Activated T-helper 1 cell treated with anti-CD3 and anti-CD28 coated beads, Interleukin-12 subunit alpha, Interleukin-12 subunit beta, Interleukin-2, Interleukin-4 antibody, amounts not matched to agents 30 ng/mL and 10 ng/mL and 1 ng/mL, durations not matched to agents 14 hours and 24 hours and 36 hours (primary cell): ENCODE measurements at regions of chr2 and their contacts with region 1.

Region 1: GRCh38 chr2:8544786-8545694 is 136.8 kb upstream of the ID2 start:
- DNase-seq: peak; percentile 83
- H3K4me3 Mint-ChIP-seq: peak overlapping the region; percentile 59
- H3K27ac Mint-ChIP-seq: peak overlapping the region; percentile 99
- H3K4me1 Mint-ChIP-seq: peaks cover 80% of the 10 kb centered on the region
- H3K27me3 Mint-ChIP-seq: no peaks in the 10 kb centered on the region

Region 2: DNA sequence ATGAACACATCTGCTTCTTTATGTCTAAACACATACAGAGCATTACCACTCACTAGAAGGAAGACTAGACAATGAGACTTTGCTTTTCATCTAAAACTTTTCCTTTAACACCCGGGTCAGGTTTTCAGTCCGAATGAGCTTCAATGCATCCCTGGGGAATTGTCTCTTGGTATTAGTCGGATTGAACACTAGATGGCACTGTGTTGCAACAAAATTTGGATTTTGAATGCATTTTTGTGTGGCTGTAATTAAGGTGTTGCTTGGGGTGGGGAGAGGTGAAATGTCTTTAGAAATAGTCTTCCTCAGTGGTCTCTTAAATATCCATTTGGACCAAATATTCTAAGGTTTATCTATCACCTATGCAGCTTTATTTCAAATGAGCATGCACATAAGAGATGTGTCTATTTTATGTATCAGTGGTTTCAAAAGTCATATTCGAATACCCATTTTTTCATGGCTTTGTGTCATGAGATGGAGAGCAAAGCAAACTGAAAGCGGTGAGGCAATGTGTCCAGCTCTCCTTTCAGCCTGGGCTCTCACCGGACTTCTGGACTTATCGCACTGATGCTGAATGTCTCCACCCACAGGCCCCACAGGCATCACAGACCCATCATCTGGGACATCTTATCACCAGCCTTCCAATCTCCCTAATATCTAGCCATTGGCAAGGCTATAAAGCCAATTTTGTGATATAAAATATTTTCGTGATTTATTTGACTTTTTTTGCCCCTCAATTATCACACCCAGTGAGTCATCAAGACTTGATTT is 1117.6 kb before region 1 on chr2:
- intact Hi-C with region 1: loop called (anchors 1 kb)
- DNase-seq: peak; percentile 36
- H3K4me3 Mint-ChIP-seq: peak overlapping the region; percentile 2
- H3K27ac Mint-ChIP-seq: peak overlapping the region; percentile 69
- H3K4me1 Mint-ChIP-seq: peaks cover 48% of the 10 kb centered on the region
- H3K27me3 Mint-ChIP-seq: peaks cover 3% of the 10 kb centered on the region

Region 3: DNA sequence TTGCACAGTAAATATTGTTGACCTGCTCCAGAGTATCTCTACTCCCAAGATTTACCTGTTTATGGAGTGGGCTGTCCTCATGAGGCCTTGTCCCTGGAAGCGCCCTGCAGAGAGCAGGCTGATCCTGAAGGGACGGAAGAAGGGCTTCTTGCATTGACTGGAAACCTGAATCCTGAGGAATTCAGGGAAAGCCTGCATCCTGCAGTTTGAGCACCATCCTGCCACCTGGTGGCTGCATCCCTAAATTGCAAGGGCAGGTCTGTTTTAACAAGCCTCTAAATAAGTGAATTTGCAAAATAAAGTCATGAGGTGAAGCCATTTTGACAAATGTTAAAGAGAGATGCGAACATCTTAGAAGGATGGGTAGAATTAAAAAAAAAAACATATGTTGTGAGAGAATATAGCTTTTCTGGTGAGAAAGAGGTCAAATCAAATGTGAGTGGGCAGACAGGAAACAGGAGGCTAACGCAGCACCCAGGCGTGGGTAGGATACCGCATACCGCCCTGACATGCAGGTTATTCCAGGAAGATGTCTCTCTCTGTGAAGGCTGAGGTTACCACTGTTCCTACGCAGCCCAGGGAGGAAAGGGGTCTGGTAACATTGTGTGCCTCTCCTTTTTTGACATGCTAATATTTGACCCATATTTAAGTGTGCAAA is 872.9 kb before region 1 on chr2:
- intact Hi-C with region 1: loop called (anchors 1 kb)
- DNase-seq: peak; percentile 43
- H3K4me3 Mint-ChIP-seq: peak overlapping the region; percentile 71
- H3K27ac Mint-ChIP-seq: peak overlapping the region; percentile 93
- H3K4me1 Mint-ChIP-seq: peaks cover 79% of the 10 kb centered on the region
- H3K27me3 Mint-ChIP-seq: no peaks in the 10 kb centered on the region

Region 4: GRCh38 chr2:7930800-7931635 is 614.0 kb before region 1 on chr2:
- intact Hi-C with region 1: loop called (anchors 1 kb)
- DNase-seq: no peak
- H3K4me3 Mint-ChIP-seq: no peak overlapping the region
- H3K27ac Mint-ChIP-seq: peak overlapping the region; percentile 81
- H3K4me1 Mint-ChIP-seq: peaks cover 11% of the 10 kb centered on the region
- H3K27me3 Mint-ChIP-seq: no peaks in the 10 kb centered on the region

Region 5: DNA sequence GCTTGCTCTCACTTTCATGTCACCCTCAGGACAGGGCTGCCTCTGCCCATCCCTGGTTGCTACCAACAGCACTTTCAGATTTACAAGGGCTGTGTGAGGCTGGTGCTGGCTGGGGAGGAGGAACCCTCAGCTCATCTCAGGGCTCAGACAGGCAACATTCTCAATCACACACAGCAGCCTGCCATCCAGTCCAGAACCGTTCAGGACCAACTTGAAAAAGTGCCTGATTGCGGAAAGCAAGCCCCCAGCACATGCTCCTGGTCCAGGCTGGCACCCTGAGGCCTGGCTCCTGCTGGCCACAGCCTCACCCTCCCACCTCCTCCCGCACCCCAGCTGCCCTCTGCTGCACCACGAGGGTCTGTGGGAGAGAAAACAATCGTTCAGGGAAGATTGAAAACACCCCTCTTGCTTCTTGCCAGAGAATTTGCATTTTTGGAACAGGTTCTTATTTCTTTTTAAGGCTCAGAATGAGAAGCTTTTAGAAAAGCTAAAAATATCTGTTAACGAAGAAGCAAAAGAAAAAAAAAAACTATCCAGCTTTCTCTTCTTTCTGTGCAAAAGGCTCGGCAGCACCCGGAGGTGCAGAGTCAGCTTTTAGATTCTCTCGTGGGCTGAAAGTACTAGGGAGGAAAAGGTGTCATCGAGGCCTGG is 267.0 kb before region 1 on chr2:
- intact Hi-C with region 1: no loop called
- DNase-seq: no peak
- H3K4me3 Mint-ChIP-seq: no peak overlapping the region
- H3K27ac Mint-ChIP-seq: no peak overlapping the region
- H3K4me1 Mint-ChIP-seq: peaks cover 28% of the 10 kb centered on the region
- H3K27me3 Mint-ChIP-seq: peaks cover 13% of the 10 kb centered on the region

Region 6: DNA sequence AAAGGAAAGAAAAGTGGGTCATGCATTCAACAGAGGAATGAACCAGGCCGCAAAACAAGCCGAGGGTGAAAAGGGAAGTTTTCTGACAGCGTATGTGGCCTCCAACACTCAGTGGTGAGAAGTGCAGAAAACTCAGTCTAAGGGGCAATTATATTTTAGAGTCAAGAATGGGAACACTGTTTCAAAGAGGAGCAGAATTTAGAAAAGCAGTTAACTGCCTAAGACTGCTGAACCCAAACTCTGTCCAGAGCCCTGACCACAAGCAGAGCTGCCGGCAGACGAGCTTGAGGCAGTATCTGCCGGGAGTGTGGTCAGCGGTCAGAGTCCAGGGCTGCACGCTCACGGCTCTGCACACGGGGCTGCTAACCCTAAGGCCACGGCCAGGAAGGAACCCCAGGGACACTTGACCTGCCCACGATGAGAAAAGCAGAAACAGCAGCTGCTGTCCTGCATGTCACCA is 210.1 kb before region 1 on chr2:
- intact Hi-C with region 1: loop called (anchors 1 kb)
- DNase-seq: no peak
- H3K4me3 Mint-ChIP-seq: no peak overlapping the region
- H3K27ac Mint-ChIP-seq: no peak overlapping the region
- H3K4me1 Mint-ChIP-seq: peaks cover 15% of the 10 kb centered on the region
- H3K27me3 Mint-ChIP-seq: peaks cover 6% of the 10 kb centered on the region

Region 7: GRCh38 chr2:8514796-8515758 is 30.0 kb before region 1 on chr2:
- intact Hi-C with region 1: loop called (anchors 1 kb)
- DNase-seq: peak; percentile 58
- H3K4me3 Mint-ChIP-seq: peak overlapping the region; percentile 35
- H3K27ac Mint-ChIP-seq: peak overlapping the region; percentile 95
- H3K4me1 Mint-ChIP-seq: peaks cover 68% of the 10 kb centered on the region
- H3K27me3 Mint-ChIP-seq: no peaks in the 10 kb centered on the region

Region 8: GRCh38 chr2:8761529-8762164 is 216.6 kb after region 1 on chr2:
- intact Hi-C with region 1: loop called (anchors 5 kb)
- DNase-seq: no peak
- H3K4me3 Mint-ChIP-seq: no peak overlapping the region
- H3K27ac Mint-ChIP-seq: no peak overlapping the region
- H3K4me1 Mint-ChIP-seq: no peaks in the 10 kb centered on the region
- H3K27me3 Mint-ChIP-seq: no peaks in the 10 kb centered on the region

Region 9: DNA sequence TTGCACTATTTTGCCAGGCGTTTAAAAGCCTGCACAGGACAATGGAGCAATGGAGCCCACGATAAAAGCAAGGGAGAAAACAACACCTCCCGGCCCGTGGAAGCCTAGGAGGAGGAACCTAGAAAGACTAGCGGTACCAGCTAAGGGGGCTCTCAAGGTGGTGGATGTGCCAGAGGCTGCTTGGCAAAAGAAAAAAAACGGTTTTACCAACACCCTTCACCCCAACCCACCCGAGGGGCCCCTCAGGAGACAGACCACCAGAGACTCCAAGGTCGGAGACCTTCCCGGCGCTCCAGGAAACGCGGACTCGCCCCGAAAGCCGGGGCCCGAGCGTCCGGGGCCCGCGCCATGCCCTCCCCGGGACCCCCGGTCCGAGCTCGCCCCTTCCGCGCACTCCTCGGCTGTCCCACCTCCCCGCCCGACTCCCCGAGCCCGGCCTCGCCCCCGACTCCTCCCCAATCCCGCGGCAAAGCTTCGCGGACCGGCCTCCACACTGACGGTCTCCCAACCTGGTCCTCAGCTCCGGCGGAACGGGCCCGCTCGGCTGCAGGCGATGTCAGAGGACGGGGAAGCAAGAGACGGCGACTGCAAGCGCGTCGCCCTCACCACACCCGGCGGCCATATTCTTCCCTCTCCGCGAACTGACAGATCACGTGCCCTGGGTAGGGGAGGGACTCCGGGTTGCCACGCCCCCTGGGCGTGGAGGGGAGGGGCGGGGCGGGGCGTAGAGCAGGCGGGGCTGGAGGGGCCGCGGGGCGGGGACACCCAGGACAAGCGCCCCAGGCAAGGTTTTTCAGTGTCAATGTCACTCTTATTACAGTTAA is 292.1 kb after region 1 on chr2 and contains the start of gene KIDINS220:
- intact Hi-C with region 1: no loop called
- DNase-seq: peak; percentile 72
- H3K4me3 Mint-ChIP-seq: peak within 1 kb of the TSS; percentile 100
- H3K27ac Mint-ChIP-seq: peak within 1 kb of the TSS; percentile 96
- H3K4me1 Mint-ChIP-seq: peaks cover 31% of the 10 kb centered on the region
- H3K27me3 Mint-ChIP-seq: no peaks in the 10 kb centered on the region
- total RNA-seq, gene KIDINS220: 24.3 and 24.5 TPM in 2 replicates